ENCODE measurements at regions of chr7 and their contacts with region 1.

Region 1: GRCh38 chr7:83410989-83411591 is 237.8 kb downstream of the SEMA3E start:
- DNase-seq: no peak
- ATAC-seq: peak; percentile 52; the same call in 1 of the 3 replicates
- H3K4me3 ChIP-seq: no peak overlapping the region
- H3K27ac ChIP-seq: no peak overlapping the region
- H3K4me1 ChIP-seq: no peaks in the 10 kb centered on the region
- H3K27me3 ChIP-seq: no peaks in the 10 kb centered on the region
- CTCF ChIP-seq: peak; percentile 47 to 63 (median 51); a peak in 5 of 6 replicates
- EP300 ChIP-seq: no peak
- POLR2A ChIP-seq: no peak
- RAD21 ChIP-seq: peak; percentile 89

Region 2: DNA sequence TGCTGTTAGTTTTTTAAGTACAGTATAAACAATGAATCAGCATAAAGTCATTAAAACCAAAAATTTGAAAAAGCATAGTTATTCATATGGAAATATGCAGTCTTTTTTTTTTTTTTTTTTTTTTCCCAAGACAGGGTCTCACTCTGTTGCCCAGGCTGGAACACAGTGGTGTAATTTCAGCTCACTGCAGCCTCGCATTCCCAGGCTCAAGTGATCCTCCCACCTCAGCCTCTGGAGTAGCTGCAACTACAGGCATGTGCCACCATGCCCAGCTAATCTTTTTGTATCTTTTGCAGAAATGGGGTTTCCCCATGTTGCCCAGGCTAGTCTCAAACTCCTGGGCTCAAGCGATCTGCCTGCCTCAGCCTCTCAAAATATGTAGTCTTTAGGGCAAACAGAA is 55.9 kb after region 1 on chr7:
- CTCF ChIA-PET with region 1: no interaction called
- POLR2A ChIA-PET with region 1: no interaction called
- RAD21 ChIA-PET with region 1: no interaction called
- SMC1A ChIA-PET with region 1: no interaction called
- in situ Hi-C with region 1: no loop called
- intact Hi-C with region 1: no loop called
- DNase-seq: no peak
- ATAC-seq: no peak
- H3K4me3 ChIP-seq: no peak overlapping the region
- H3K27ac ChIP-seq: no peak overlapping the region
- H3K4me1 ChIP-seq: no peaks in the 10 kb centered on the region
- H3K27me3 ChIP-seq: no peaks in the 10 kb centered on the region
- CTCF ChIP-seq: no peak
- EP300 ChIP-seq: no peak
- POLR2A ChIP-seq: no peak
- RAD21 ChIP-seq: no peak

Region 3: DNA sequence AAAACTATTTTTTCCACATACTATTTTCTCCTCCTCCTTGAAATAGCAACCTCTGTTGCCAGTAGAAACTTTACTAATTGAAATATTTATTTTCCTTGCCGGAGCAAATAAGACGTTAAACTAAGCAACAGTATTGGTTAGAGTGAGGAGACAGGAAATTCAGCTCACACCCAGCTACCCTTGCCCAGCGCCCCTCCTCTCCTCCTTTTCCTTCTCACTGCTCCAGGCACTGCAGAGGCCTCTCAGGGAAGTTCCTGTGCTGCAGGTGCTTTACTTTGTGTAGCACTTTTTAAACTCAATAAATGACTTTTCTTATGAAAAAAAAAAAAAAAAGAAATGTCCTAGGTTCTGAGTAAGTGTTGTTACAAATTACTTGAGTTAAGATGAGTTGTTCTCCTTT is 103.9 kb after region 1 on chr7:
- CTCF ChIA-PET with region 1: interaction called, 4 read pairs
- POLR2A ChIA-PET with region 1: no interaction called
- RAD21 ChIA-PET with region 1: interaction called, 4 read pairs
- SMC1A ChIA-PET with region 1: interaction called, 7 read pairs
- in situ Hi-C with region 1: no loop called
- intact Hi-C with region 1: loop called (anchors 1 kb)
- DNase-seq: no peak
- ATAC-seq: no peak
- H3K4me3 ChIP-seq: no peak overlapping the region
- H3K27ac ChIP-seq: no peak overlapping the region
- H3K4me1 ChIP-seq: no peaks in the 10 kb centered on the region
- H3K27me3 ChIP-seq: no peaks in the 10 kb centered on the region
- CTCF ChIP-seq: no peak
- EP300 ChIP-seq: no peak
- POLR2A ChIP-seq: no peak
- RAD21 ChIP-seq: no peak

Measured in GM12878 (cell line).